PC-9 (cell line): ENCODE measurements at regions of chr5 and their contacts with region 1.

Region 1: DNA sequence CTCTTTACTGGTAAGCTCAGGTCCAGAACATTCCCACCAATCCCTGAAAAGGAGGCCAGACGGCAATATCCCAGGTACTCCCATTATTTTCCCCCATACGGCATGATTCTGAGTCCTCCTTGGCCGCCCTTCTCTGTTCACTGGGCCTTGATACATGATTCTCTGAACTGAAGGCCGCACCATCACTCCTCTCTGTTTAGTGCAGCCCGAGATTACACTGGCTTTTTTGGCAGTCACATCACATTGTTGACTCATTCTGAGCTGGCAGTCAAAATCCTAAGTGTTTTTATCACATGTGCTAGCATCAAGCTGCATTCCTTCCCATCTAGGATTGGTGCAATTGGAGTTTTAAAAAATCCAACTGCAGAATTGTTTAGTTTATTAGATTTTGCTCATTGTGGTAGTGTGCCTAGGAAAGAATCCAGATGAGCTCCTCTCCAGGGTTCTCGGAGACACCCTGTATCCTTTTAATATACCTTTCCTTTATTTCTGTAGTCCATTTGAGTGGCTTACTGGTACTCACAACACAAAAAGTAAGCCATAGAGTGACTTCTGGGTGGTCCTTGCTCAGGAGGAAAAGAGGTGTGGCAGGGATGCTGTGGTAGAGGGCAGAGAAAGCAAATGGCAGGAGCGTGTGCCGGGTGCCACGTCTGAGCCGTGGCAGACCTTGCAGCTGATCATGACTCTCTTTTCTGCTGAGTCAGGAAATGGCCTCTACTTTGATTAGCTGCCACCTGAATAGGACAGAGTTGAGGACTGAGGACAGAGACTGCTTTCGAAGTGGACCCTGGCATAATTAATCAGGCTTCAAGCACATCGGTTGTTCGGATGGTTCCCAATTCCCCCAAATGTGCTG is 121.1 kb upstream of the IL12B start:
- DNase-seq: peak; percentile 53 to 81
- H3K4me3 ChIP-seq: no peak overlapping the region
- H3K27ac ChIP-seq: 0 out of 2 replicates have a peak overlapping the region, but pooled peaks have one; percentile 6
- H3K4me1 ChIP-seq: peaks cover 29% of the 10 kb centered on the region
- H3K27me3 ChIP-seq: no peaks in the 10 kb centered on the region
- CTCF ChIP-seq: no peak

Region 2: DNA sequence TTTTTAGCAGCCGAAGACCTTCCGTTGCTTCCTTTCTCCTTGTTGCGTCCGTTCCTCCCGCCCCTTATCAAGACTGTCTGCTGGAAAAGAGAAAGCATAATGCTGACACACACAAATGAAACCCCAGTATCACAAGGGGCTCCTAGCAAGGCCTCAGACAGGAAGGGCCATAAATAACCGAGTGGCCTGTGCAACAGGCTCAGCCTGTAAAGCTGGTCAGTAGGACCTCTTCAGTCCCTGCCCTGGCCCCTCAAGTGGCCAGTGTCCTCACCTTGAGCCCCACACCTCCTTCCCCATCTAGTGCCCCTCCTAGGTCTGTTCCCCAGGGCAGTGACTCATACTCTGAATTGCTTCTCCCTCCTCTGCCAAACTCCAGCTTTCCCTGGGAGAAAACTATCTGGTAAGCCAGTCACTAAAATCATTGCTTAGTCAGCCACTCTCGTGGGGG is 53.5 kb after region 1 on chr5:
- CTCF ChIA-PET with region 1: no interaction called
- POLR2A ChIA-PET with region 1: interaction called, 4 read pairs
- intact Hi-C with region 1: loop called (anchors 1 kb)
- DNase-seq: peak; percentile 89 to 93
- H3K4me3 ChIP-seq: peak overlapping the region; percentile 18; the same call in 1 of the 2 replicates
- H3K27ac ChIP-seq: peak overlapping the region; percentile 82
- H3K4me1 ChIP-seq: peaks cover 38% of the 10 kb centered on the region
- H3K27me3 ChIP-seq: no peaks in the 10 kb centered on the region
- CTCF ChIP-seq: no peak

Region 3: GRCh38 chr5:159616952-159617351 is 165.5 kb after region 1 on chr5:
- CTCF ChIA-PET with region 1: no interaction called
- POLR2A ChIA-PET with region 1: no interaction called
- intact Hi-C with region 1: no loop called
- DNase-seq: peak in 1 of 2 experiments; percentile 69
- H3K4me3 ChIP-seq: no peak overlapping the region
- H3K27ac ChIP-seq: no peak overlapping the region
- H3K4me1 ChIP-seq: peaks cover 25% of the 10 kb centered on the region
- H3K27me3 ChIP-seq: no peaks in the 10 kb centered on the region
- CTCF ChIP-seq: no peak

Region 4: GRCh38 chr5:159669559-159669958 is 218.1 kb after region 1 on chr5:
- CTCF ChIA-PET with region 1: no interaction called
- POLR2A ChIA-PET with region 1: no interaction called
- intact Hi-C with region 1: no loop called
- DNase-seq: no peak
- H3K4me3 ChIP-seq: no peak overlapping the region
- H3K27ac ChIP-seq: no peak overlapping the region
- H3K4me1 ChIP-seq: no peaks in the 10 kb centered on the region
- H3K27me3 ChIP-seq: no peaks in the 10 kb centered on the region
- CTCF ChIP-seq: no peak

Region 5: GRCh38 chr5:160520609-160521391 is 1069.4 kb after region 1 on chr5:
- CTCF ChIA-PET with region 1: no interaction called
- POLR2A ChIA-PET with region 1: interaction called, 15 read pairs
- intact Hi-C with region 1: no loop called
- DNase-seq: no peak
- H3K4me3 ChIP-seq: no peak overlapping the region
- H3K27ac ChIP-seq: no peak overlapping the region
- H3K4me1 ChIP-seq: no peaks in the 10 kb centered on the region
- H3K27me3 ChIP-seq: peaks cover 30% of the 10 kb centered on the region
- CTCF ChIP-seq: no peak